ENCODE measurements at regions of chr22 and their contacts with region 1.

Region 1: GRCh38 chr22:30634471-30635233 is 929 bp upstream of the SLC35E4 start:
- DNase-seq: peak; percentile 90
- ATAC-seq: peak; percentile 64
- H3K4me3 Mint-ChIP-seq: peak overlapping the region; percentile 80
- H3K27ac Mint-ChIP-seq: peak overlapping the region; percentile 87
- H3K4me1 Mint-ChIP-seq: peaks cover 13% of the 10 kb centered on the region
- H3K27me3 Mint-ChIP-seq: no peaks in the 10 kb centered on the region

Region 2: DNA sequence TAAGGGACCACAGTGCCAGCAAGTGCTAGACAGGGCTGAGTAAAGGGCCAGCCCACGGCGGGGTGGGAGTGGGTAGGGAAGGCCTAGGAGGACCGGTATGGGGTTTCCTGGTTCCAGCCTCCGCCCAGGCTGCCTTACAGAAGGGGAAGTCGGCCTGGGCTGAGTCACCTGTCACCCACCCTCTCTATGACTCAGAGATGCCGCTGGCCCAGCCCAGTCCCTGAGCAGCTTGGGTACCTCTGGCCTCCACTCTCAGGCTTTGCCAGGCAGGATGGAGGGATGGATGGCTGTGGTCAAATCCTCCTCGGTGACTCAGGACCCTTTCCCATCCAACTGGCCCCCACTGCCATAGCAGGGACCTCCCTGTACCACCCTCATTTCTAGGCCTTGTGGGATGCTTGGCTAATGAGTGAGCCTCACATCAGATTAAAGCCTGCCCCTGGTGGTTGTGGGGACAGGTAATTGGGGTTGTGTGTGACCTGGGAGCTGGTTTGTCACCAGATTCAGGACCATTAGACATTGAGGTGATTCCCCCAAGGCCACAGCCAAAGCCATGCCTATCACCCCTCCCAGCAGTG is 14.9 kb after region 1 on chr22:
- POLR2A ChIA-PET with region 1: interaction called, 14 read pairs
- DNase-seq: peak; percentile 67
- ATAC-seq: peak; percentile 99
- H3K4me3 Mint-ChIP-seq: no peak overlapping the region
- H3K27ac Mint-ChIP-seq: peak overlapping the region; percentile 61
- H3K4me1 Mint-ChIP-seq: peaks cover 14% of the 10 kb centered on the region
- H3K27me3 Mint-ChIP-seq: no peaks in the 10 kb centered on the region

Region 3: GRCh38 chr22:30667494-30668385 is 33.1 kb after region 1 on chr22 and contains the start of gene DUSP18:
- POLR2A ChIA-PET with region 1: interaction called, 13 read pairs
- DNase-seq: peak; percentile 96
- ATAC-seq: peak; percentile 94
- H3K4me3 Mint-ChIP-seq: peak within 1 kb of the TSS; percentile 99
- H3K27ac Mint-ChIP-seq: peak within 1 kb of the TSS; percentile 79
- H3K4me1 Mint-ChIP-seq: peaks cover 14% of the 10 kb centered on the region
- H3K27me3 Mint-ChIP-seq: peaks cover 15% of the 10 kb centered on the region
- total RNA-seq, gene DUSP18: 10.5 to 12.8 TPM

Region 4: GRCh38 chr22:30754971-30755756 is 120.5 kb after region 1 on chr22:
- POLR2A ChIA-PET with region 1: interaction called, 10 read pairs
- DNase-seq: peak; percentile 38
- ATAC-seq: peak; percentile 76
- H3K4me3 Mint-ChIP-seq: no peak overlapping the region
- H3K27ac Mint-ChIP-seq: no peak overlapping the region
- H3K4me1 Mint-ChIP-seq: no peaks in the 10 kb centered on the region
- H3K27me3 Mint-ChIP-seq: no peaks in the 10 kb centered on the region

Measured in activated naive CD8-positive, alpha-beta T cell treated with anti-CD3 and anti-CD28 coated beads, Interleukin-2, amount 10 ng/mL, durations not matched to agents 7 days and 5 days (primary cell).